ENCODE measurements at regions of chr5 and their contacts with region 1.

Region 1: DNA sequence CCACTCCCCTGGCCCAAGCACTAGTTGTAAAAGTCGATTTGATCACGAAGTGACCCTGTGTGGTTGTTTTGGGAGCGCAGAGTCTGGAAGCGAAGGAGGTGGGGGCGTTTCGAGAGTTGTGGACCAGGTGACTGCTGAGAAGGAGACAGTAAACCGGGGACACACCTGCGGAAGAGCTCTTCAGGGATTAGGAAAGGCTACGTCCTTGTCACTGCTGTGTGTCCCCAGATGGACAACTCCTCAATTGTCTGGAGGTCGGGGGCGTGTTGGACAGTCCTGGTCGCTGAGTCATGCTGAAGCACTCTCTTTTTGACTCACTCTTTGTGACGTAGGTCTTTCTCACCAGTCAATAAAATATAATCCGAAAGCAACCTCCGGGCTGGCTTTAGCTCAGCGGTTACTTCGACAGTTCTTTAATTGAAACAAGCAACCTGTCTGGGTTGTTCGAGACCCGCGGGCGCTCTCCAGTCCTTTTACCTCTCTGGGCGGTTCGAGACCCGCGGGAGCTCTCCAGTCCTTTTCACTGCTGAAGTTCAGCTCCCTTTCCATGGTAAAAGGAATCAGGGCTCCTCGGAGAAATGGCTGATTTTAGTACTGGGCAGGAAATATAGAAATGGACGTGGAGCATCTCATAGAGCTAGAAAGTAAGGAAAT is 10.8 kb downstream of the ZMAT2 start:
- DNase-seq: peak; percentile 70 to 97 (median 82)
- ATAC-seq: peak; percentile 77
- H3K4me3 ChIP-seq: peak overlapping the region; percentile 70
- H3K4me3 Mint-ChIP-seq: peak overlapping the region; percentile 99
- H3K27ac ChIP-seq: peak overlapping the region; percentile 87 to 88
- H3K27ac Mint-ChIP-seq: peak overlapping the region; percentile 98
- H3K4me1 ChIP-seq: peaks cover 9% of the 10 kb centered on the region
- H3K4me1 Mint-ChIP-seq: peaks cover 27% of the 10 kb centered on the region
- H3K27me3 ChIP-seq: no peaks in the 10 kb centered on the region
- H3K27me3 Mint-ChIP-seq: peaks cover 8% of the 10 kb centered on the region
- CTCF ChIP-seq: no peak

Region 2: DNA sequence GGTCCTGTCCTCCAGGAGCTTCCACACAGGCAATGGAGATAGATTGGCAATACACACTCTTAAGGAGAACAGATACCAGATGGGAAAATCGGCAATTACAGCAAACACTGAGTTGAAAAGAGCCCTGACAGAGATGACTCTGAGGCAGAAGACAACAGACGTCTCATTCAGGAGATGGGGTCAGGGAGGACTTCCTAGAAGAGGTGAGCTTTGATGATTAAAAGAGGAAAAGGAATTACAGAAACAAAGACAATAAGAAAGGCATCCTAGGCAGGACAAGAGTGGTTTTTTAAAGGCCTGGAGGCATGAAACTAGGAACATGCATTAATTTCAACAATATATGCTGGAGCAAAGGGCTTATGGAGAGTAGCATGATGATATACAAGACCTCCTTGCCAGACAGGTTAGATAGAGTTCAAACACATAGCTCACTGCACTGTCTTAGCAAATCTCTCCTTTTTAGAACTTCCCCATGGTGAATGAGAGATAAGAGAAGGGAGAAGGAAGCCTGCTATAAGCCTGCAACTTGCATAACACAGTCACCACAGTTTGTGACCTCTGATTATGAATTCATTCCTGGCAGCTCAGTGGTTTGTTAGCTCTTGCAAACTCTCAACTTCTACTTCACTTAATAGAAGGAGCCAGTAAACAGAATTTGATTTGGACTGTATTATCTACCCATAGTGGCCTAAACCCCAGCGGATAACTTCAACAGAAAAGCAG is 1561.4 kb before region 1 on chr5:
- CTCF ChIA-PET with region 1: no interaction called
- POLR2A ChIA-PET with region 1: no interaction called
- intact Hi-C with region 1: no loop called
- DNase-seq: peak in 1 of 14 experiments; percentile 3
- ATAC-seq: no peak
- H3K4me3 ChIP-seq: no peak overlapping the region
- H3K4me3 Mint-ChIP-seq: no peak overlapping the region
- H3K27ac ChIP-seq: no peak overlapping the region
- H3K27ac Mint-ChIP-seq: no peak overlapping the region
- H3K4me1 ChIP-seq: no peaks in the 10 kb centered on the region
- H3K4me1 Mint-ChIP-seq: no peaks in the 10 kb centered on the region
- H3K27me3 ChIP-seq: no peaks in the 10 kb centered on the region
- H3K27me3 Mint-ChIP-seq: no peaks in the 10 kb centered on the region
- CTCF ChIP-seq: no peak

Region 3: DNA sequence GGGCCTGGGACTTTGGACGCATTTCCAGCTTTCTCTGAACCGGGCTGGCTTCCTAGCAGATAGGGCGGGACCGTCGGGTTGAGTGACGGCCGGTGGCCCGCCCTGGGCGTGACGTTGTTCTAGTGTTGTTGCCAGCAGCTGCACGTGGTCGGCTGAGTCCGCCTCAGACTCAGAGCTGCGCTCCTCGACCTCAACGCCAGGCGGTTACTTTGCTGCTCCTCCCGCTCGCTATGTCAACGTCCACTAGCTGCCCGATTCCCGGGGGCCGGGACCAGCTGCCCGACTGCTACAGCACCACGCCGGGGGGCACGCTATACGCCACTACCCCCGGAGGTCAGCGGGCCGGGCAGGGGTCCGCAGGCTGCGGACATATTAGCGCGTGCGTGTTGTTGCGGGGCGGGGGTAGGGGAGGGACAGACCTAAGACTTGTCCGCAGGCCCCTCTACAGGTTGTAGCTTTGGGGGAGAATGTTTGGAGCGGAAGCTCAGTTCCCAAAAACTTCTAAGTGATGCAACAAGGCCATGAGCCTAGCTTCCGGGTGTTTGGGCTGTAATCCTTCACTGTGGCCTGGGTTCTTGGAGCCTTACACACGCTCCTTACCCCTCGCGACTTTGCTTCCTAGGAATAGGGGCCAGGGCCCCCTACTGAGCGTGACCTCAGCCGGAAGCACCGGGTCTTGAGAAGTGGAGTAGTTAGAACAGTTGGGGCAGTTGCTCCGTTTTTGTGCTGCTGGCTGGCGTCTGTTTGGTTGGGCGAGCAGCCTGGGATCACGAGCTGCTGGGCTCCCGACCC is 163.3 kb before region 1 on chr5 and contains the start of gene EIF4EBP3:
- CTCF ChIA-PET with region 1: no interaction called
- POLR2A ChIA-PET with region 1: interaction called, 21 read pairs
- intact Hi-C with region 1: loop called (anchors 5 kb)
- DNase-seq: peak; percentile 79 to 95 (median 86)
- ATAC-seq: peak; percentile 97
- H3K4me3 ChIP-seq: peak within 1 kb of the TSS; percentile 79
- H3K4me3 Mint-ChIP-seq: peak within 1 kb of the TSS; percentile 96
- H3K27ac ChIP-seq: peak within 1 kb of the TSS; percentile 88 to 89
- H3K27ac Mint-ChIP-seq: peak within 1 kb of the TSS; percentile 96
- H3K4me1 ChIP-seq: peaks cover 31% of the 10 kb centered on the region
- H3K4me1 Mint-ChIP-seq: peaks cover 38% of the 10 kb centered on the region
- H3K27me3 ChIP-seq: no peaks in the 10 kb centered on the region
- H3K27me3 Mint-ChIP-seq: no peaks in the 10 kb centered on the region
- CTCF ChIP-seq: peak; percentile 72
- total RNA-seq, gene EIF4EBP3: 12.7 to 15.1 TPM

Region 4: GRCh38 chr5:140639148-140639979 is 71.7 kb before region 1 on chr5 and contains the start of gene TMCO6:
- CTCF ChIA-PET with region 1: interaction called, 3 read pairs
- POLR2A ChIA-PET with region 1: interaction called, 15 read pairs
- intact Hi-C with region 1: loop called in 1 of 2 experiments (anchors 2 kb)
- DNase-seq: peak; percentile 94 to 99 (median 96)
- ATAC-seq: peak; percentile 98
- H3K4me3 ChIP-seq: peak within 1 kb of the TSS; percentile 73
- H3K4me3 Mint-ChIP-seq: peak within 1 kb of the TSS; percentile 92
- H3K27ac ChIP-seq: peak within 1 kb of the TSS; percentile 77 to 94
- H3K27ac Mint-ChIP-seq: peak within 1 kb of the TSS; percentile 93
- H3K4me1 ChIP-seq: peaks cover 28% of the 10 kb centered on the region
- H3K4me1 Mint-ChIP-seq: peaks cover 34% of the 10 kb centered on the region
- H3K27me3 ChIP-seq: no peaks in the 10 kb centered on the region
- H3K27me3 Mint-ChIP-seq: no peaks in the 10 kb centered on the region
- CTCF ChIP-seq: peak; percentile 76
- total RNA-seq, gene TMCO6: 20.9 to 21.1 TPM

Region 5: DNA sequence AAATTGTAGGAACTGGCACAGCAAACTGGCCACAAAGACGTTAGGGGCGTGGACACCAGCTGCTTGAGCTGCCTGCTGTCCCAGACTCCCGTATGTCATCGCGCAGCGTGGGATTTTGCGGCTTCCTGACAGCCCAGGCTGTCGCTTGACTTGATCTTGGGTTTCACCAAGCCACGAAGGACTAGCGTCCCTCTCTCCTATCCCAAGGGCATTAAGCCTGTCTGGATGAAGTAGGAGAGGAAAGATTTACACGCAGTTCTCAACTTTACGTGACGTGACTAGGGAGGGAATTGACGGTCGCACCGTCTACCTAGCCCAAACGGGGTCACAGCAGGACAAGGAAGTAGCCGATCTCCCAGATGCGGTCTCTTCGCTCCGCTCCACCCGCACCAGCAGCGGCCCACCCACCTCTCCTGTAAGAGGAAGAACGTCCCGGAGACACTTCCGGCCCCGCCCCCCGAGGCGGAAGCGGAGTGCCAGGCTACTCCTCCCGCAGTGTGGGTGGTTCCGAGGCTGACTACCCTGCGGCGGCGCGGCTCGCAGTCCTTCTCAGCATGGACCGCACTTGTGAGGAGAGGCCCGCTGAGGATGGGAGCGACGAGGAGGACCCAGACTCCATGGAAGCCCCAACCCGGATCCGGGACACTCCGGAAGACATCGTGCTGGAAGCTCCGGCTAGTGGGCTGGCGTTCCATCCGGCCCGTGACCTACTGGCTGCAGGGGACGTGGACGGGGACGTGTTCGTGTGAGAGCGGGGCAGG is 46.5 kb before region 1 on chr5 and contains the start of gene WDR55:
- CTCF ChIA-PET with region 1: interaction called, 3 read pairs
- POLR2A ChIA-PET with region 1: interaction called, 15 read pairs
- intact Hi-C with region 1: no loop called
- DNase-seq: peak; percentile 90 to 98 (median 95)
- ATAC-seq: peak; percentile 92
- H3K4me3 ChIP-seq: peak within 1 kb of the TSS; percentile 98
- H3K4me3 Mint-ChIP-seq: peak within 1 kb of the TSS; percentile 91
- H3K27ac ChIP-seq: peak within 1 kb of the TSS; percentile 87 to 93
- H3K27ac Mint-ChIP-seq: peak within 1 kb of the TSS; percentile 98
- H3K4me1 ChIP-seq: peaks cover 26% of the 10 kb centered on the region
- H3K4me1 Mint-ChIP-seq: peaks cover 45% of the 10 kb centered on the region
- H3K27me3 ChIP-seq: no peaks in the 10 kb centered on the region
- H3K27me3 Mint-ChIP-seq: no peaks in the 10 kb centered on the region
- CTCF ChIP-seq: no peak
- total RNA-seq, gene WDR55: 40.1 to 42.9 TPM

Region 6: GRCh38 chr5:140690941-140691924 is 19.8 kb before region 1 on chr5 and contains the starts of genes HARS1 and HARS2:
- CTCF ChIA-PET with region 1: no interaction called
- POLR2A ChIA-PET with region 1: interaction called, 32 read pairs
- intact Hi-C with region 1: no loop called
- DNase-seq: peak; percentile 61 to 93 (median 78)
- ATAC-seq: peak; percentile 90
- H3K4me3 ChIP-seq: peak within 1 kb of the TSS; percentile 98
- H3K4me3 Mint-ChIP-seq: peak within 1 kb of the TSS; percentile 99
- H3K27ac ChIP-seq: peak within 1 kb of the TSS; percentile 64 to 90
- H3K27ac Mint-ChIP-seq: peak within 1 kb of the TSS; percentile 97
- H3K4me1 ChIP-seq: peaks cover 28% of the 10 kb centered on the region
- H3K4me1 Mint-ChIP-seq: peaks cover 35% of the 10 kb centered on the region
- H3K27me3 ChIP-seq: no peaks in the 10 kb centered on the region
- H3K27me3 Mint-ChIP-seq: no peaks in the 10 kb centered on the region
- CTCF ChIP-seq: no peak
- total RNA-seq, gene HARS1: 53.5 to 54.1 TPM
- total RNA-seq, gene HARS2: 38.1 to 38.3 TPM

Region 7: GRCh38 chr5:140700177-140701144 is 10.6 kb before region 1 on chr5 and contains the start of gene ZMAT2:
- CTCF ChIA-PET with region 1: interaction called, 3 read pairs
- POLR2A ChIA-PET with region 1: interaction called, 72 read pairs
- intact Hi-C with region 1: loop called in 1 of 2 experiments (anchors 1 kb)
- DNase-seq: peak; percentile 84 to 98 (median 90)
- ATAC-seq: peak; percentile 98
- H3K4me3 ChIP-seq: peak within 1 kb of the TSS; percentile 96
- H3K4me3 Mint-ChIP-seq: peak within 1 kb of the TSS; percentile 96
- H3K27ac ChIP-seq: peak within 1 kb of the TSS; percentile 64 to 90
- H3K27ac Mint-ChIP-seq: peak within 1 kb of the TSS; percentile 85
- H3K4me1 ChIP-seq: peaks cover 13% of the 10 kb centered on the region
- H3K4me1 Mint-ChIP-seq: peaks cover 31% of the 10 kb centered on the region
- H3K27me3 ChIP-seq: no peaks in the 10 kb centered on the region
- H3K27me3 Mint-ChIP-seq: no peaks in the 10 kb centered on the region
- CTCF ChIP-seq: no peak
- total RNA-seq, gene ZMAT2: 29.0 to 32.3 TPM

Measured in CD4-positive, alpha-beta T cell (primary cell).